ENCODE measurements at regions of chr9 and their contacts with region 1.

Region 1: DNA sequence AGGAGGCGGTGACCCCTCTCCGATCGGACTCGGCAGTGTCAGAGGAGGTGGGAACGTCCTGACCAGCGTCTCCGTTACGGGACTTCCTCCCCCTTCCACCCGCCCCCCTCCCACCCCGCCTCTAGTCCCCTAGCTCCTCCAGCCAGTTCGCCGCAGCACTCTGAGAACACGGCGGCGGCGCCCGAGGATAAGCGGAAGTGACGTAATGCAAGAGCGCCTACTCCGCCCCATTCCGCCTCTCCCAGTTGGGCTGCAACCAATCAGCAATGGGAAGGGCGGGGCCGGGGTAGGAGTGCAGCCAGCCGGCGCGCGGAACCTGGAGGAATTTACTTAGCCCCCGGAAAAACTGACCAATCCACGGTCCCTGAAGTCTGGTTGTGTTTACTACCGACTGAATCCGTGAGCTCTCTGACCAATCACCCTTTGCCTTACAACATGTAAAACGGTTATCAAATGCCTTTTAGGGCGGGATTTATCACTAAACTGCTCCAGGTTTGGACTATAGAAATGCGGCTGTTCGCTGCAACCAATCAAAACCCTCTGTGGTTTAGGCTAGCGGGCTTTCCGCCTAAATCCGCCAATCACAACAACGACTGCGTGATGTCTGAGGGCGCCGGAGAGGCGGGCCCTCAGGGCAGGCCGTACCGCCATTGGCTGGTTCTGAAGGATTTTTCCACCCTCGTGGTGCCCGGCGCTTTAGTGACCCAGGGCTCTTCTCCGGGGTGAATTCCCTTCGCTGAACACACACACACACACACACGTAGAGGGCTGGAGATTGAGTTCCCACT is at the start of gene ZBTB5:
- H3K4me3 ChIP-seq: peak within 1 kb of the TSS; percentile 95
- H3K27ac ChIP-seq: peak within 1 kb of the TSS; percentile 86
- H3K4me1 ChIP-seq: no peaks in the 10 kb centered on the region
- CTCF ChIP-seq: no peak

Region 2: GRCh38 chr9:37229882-37230487 is 235.5 kb before region 1 on chr9:
- CTCF ChIA-PET with region 1: no interaction called
- POLR2A ChIA-PET with region 1: interaction called, 11 read pairs
- H3K4me3 ChIP-seq: no peak overlapping the region
- H3K27ac ChIP-seq: no peak overlapping the region
- H3K4me1 ChIP-seq: peaks cover 5% of the 10 kb centered on the region; the same call in 1 of the 2 replicates
- CTCF ChIP-seq: no peak

Region 3: DNA sequence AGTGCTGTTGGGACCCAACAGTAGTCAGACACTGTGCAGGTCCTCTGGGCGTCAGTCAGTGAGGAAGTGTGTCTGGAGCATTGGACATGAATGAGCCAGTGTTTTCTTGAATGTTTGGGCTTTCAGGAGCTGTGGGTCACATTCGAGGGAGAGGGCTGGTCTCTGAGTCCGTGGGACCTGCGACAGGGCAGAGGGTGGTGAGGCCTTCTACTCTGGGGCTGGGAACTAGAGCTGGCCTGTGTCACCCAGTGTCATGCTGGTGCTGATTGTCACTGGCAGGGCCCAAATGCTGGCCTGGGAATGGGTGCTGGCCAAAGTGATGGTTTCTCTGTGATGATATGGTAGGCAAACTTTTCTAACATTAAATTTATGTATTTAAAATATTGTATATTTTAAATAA is 30.6 kb after region 1 on chr9:
- CTCF ChIA-PET with region 1: no interaction called
- POLR2A ChIA-PET with region 1: interaction called, 11 read pairs
- H3K4me3 ChIP-seq: no peak overlapping the region
- H3K27ac ChIP-seq: no peak overlapping the region
- H3K4me1 ChIP-seq: no peaks in the 10 kb centered on the region
- CTCF ChIP-seq: no peak

Measured in HEK293 (cell line).